CD4-positive, alpha-beta memory T cell (primary cell): ENCODE measurements at regions of chr6 and their contacts with region 1.

Region 1: DNA sequence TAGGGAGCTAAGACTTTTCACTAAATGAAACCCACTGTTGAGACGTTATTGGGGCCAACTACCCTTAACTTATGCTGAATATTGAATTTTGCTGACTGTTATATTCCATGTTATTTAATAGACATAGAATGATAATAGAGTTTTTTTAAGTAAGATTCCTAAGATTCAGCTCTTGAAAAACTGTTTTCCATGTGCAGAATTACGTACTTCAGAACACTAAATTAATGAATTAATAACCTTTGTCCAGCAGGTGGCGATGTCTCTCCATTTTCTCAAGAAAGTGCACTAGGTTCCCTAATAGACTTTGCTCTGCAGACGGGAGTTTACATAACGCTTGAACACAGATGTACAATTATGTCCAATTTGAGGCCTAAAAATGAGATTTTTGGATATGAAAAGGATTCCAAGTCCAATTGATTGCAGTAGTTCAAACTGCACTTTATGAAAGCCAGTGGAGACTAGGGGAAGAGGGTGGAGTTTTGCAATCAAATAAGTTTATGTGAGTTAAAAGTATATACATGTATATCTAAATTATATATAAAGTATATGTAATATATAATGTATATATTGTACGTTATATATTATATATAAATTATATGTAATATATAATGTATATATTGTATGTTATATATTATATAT is 282.1 kb downstream of the UST start:
- DNase-seq: peak; percentile 77 to 80 (median 78)
- H3K4me3 ChIP-seq: no peak overlapping the region
- H3K4me3 Mint-ChIP-seq: peak overlapping the region in 2 of 8 donors; percentile 66 to 69
- H3K27ac ChIP-seq: no peak overlapping the region
- H3K27ac Mint-ChIP-seq: peak overlapping the region in 6 of 7 donors; percentile 10 to 93 (median 78)
- H3K4me1 ChIP-seq: peaks cover 49% of the 10 kb centered on the region
- H3K4me1 Mint-ChIP-seq: peaks cover 33 to 46% (median 42%) of the 10 kb centered on the region in 4 donors
- H3K27me3 ChIP-seq: no peaks in the 10 kb centered on the region
- H3K27me3 Mint-ChIP-seq: no peaks in the 10 kb centered on the region

Region 2: GRCh38 chr6:148578245-148578732 is 450.6 kb before region 1 on chr6:
- CTCF ChIA-PET with region 1: interaction called, 15 read pairs
- POLR2A ChIA-PET with region 1: no interaction called
- intact Hi-C with region 1: no loop called
- DNase-seq: peak in 4 of 5 donors; percentile 28 to 46 (median 41)
- H3K4me3 ChIP-seq: no peak overlapping the region
- H3K4me3 Mint-ChIP-seq: no peak overlapping the region
- H3K27ac ChIP-seq: no peak overlapping the region
- H3K27ac Mint-ChIP-seq: peak overlapping the region in 1 of 7 donors; percentile 72
- H3K4me1 ChIP-seq: no peaks in the 10 kb centered on the region
- H3K4me1 Mint-ChIP-seq: peaks cover 3 to 7% (median 5%) of the 10 kb centered on the region in 4 donors
- H3K27me3 ChIP-seq: no peaks in the 10 kb centered on the region
- H3K27me3 Mint-ChIP-seq: peaks cover 8 to 11% of the 10 kb centered on the region in 2 donors

Region 3: GRCh38 chr6:148608199-148608951 is 420.5 kb before region 1 on chr6:
- CTCF ChIA-PET with region 1: no interaction called
- POLR2A ChIA-PET with region 1: no interaction called
- intact Hi-C with region 1: no loop called
- DNase-seq: no peak
- H3K4me3 ChIP-seq: no peak overlapping the region
- H3K4me3 Mint-ChIP-seq: no peak overlapping the region
- H3K27ac ChIP-seq: no peak overlapping the region
- H3K27ac Mint-ChIP-seq: no peak overlapping the region
- H3K4me1 ChIP-seq: no peaks in the 10 kb centered on the region
- H3K4me1 Mint-ChIP-seq: no peaks in the 10 kb centered on the region
- H3K27me3 ChIP-seq: peaks cover 3% of the 10 kb centered on the region
- H3K27me3 Mint-ChIP-seq: peaks cover 9 to 11% of the 10 kb centered on the region in 2 donors

Region 4: GRCh38 chr6:149043476-149044130 is 14.7 kb after region 1 on chr6:
- CTCF ChIA-PET with region 1: interaction called, 9 read pairs
- POLR2A ChIA-PET with region 1: interaction called, 30 read pairs
- intact Hi-C with region 1: no loop called
- DNase-seq: no peak
- H3K4me3 ChIP-seq: no peak overlapping the region
- H3K4me3 Mint-ChIP-seq: peak overlapping the region in 1 of 8 donors; percentile 22
- H3K27ac ChIP-seq: no peak overlapping the region
- H3K27ac Mint-ChIP-seq: peak overlapping the region in 1 of 7 donors; percentile 64
- H3K4me1 ChIP-seq: peaks cover 40% of the 10 kb centered on the region
- H3K4me1 Mint-ChIP-seq: peaks cover 34 to 47% (median 41%) of the 10 kb centered on the region in 4 donors
- H3K27me3 ChIP-seq: no peaks in the 10 kb centered on the region
- H3K27me3 Mint-ChIP-seq: no peaks in the 10 kb centered on the region

Region 5: GRCh38 chr6:149060300-149060997 is 31.6 kb after region 1 on chr6:
- CTCF ChIA-PET with region 1: interaction called, 19 read pairs
- POLR2A ChIA-PET with region 1: interaction called, 11 read pairs
- intact Hi-C with region 1: no loop called
- DNase-seq: peak; percentile 53 to 75 (median 62)
- H3K4me3 ChIP-seq: peak overlapping the region in 1 of 2 donors; percentile 34
- H3K4me3 Mint-ChIP-seq: peak overlapping the region; percentile 65 to 87 (median 80)
- H3K27ac ChIP-seq: peak overlapping the region; percentile 47
- H3K27ac Mint-ChIP-seq: peak overlapping the region; percentile 93 to 96 (median 94)
- H3K4me1 ChIP-seq: peaks cover 46% of the 10 kb centered on the region
- H3K4me1 Mint-ChIP-seq: peaks cover 27 to 52% (median 34%) of the 10 kb centered on the region in 4 donors
- H3K27me3 ChIP-seq: no peaks in the 10 kb centered on the region
- H3K27me3 Mint-ChIP-seq: no peaks in the 10 kb centered on the region

Region 6: GRCh38 chr6:149065658-149066556 is 37.0 kb after region 1 on chr6:
- CTCF ChIA-PET with region 1: interaction called, 19 read pairs
- POLR2A ChIA-PET with region 1: interaction called, 11 read pairs
- intact Hi-C with region 1: loop called (anchors 2 kb)
- DNase-seq: peak; percentile 80 to 88 (median 85)
- H3K4me3 ChIP-seq: peak overlapping the region in 1 of 2 donors; percentile 31
- H3K4me3 Mint-ChIP-seq: peak overlapping the region; percentile 47 to 87 (median 82)
- H3K27ac ChIP-seq: peak overlapping the region; percentile 73
- H3K27ac Mint-ChIP-seq: peak overlapping the region; percentile 63 to 99 (median 98)
- H3K4me1 ChIP-seq: peaks cover 46% of the 10 kb centered on the region
- H3K4me1 Mint-ChIP-seq: peaks cover 25 to 55% (median 29%) of the 10 kb centered on the region in 4 donors
- H3K27me3 ChIP-seq: no peaks in the 10 kb centered on the region
- H3K27me3 Mint-ChIP-seq: no peaks in the 10 kb centered on the region

Region 7: DNA sequence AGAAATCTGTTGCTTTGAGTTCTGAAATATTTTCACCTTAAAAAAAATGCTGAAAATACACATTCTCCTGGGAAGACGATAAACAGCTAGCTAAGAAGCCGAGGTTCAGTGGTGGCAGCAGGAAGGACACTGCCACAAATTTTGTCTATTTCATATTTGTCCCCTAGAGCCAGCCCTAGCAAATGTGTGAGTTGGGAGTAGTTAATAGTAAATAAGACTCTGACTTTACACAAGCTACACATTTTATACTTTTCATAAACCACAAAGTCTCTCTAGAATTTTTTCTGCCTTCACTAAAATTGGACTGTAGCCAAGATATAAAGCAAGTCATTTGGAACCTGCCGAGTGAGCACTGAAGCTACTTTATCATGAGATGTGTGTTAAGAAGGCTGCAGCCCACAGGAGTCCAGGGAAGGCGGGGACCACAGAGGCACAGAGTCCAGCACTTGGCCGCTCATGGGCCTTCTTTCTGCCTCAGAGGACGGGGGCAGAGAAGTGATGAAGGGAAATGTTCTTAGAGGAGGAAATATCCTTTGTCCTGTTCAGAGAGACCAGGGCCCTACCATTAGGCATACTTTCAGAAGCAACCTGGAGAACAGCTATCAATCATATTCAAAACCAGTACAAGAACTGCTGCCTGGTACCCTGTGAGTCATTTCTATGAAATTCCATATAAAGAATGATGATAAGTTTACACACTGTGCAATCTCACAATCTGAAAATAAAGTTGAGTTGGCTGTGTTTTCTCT is 46.9 kb after region 1 on chr6:
- CTCF ChIA-PET with region 1: interaction called, 10 read pairs
- POLR2A ChIA-PET with region 1: interaction called, 23 read pairs
- intact Hi-C with region 1: no loop called
- DNase-seq: peak in 1 of 5 donors; percentile 27
- H3K4me3 ChIP-seq: no peak overlapping the region
- H3K4me3 Mint-ChIP-seq: peak overlapping the region in 6 of 8 donors; percentile 19 to 49 (median 42)
- H3K27ac ChIP-seq: no peak overlapping the region
- H3K27ac Mint-ChIP-seq: peak overlapping the region; percentile 41 to 89 (median 76)
- H3K4me1 ChIP-seq: peaks cover 15% of the 10 kb centered on the region
- H3K4me1 Mint-ChIP-seq: peaks cover 15 to 33% (median 25%) of the 10 kb centered on the region in 4 donors
- H3K27me3 ChIP-seq: no peaks in the 10 kb centered on the region
- H3K27me3 Mint-ChIP-seq: no peaks in the 10 kb centered on the region